Activated B cell treated with CpG ODN at 0.5 μM for 24 hours (primary cell): ENCODE measurements at regions of chr6 and their contacts with region 1.

Region 1: DNA sequence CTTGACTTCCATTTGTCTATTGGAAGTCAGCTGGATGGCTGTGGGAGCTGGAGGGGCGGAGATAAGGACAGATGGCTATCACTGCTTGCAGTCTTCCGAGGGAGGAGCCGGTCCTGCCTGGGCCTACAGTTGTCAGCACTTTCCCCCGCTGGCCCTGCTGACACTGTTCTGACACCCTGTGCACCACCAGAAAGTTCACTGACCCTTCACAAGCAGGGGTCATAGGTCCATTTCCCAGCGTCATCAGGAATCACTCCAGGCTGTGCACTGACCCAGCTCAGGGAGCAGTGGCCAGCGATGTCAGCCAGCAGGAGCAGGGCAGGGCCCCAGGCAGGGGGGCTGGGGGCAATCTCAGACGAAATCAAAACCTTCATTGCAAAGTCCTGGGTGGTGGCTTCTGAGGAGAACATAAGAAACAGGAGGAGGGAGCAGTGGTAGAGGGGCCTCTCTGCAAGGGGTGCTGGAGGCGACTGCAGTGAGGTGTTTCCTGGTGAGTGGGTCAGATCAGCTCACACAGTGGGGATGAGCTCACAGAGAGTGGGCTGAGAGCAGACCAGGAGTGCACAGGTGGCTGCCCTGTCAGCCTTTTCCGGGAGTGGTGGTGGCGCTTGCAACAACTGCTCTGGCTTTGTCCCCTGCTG is 26.5 kb upstream of the PLEKHG1 start:
- DNase-seq: no peak
- ATAC-seq: no peak
- H3K4me3 Mint-ChIP-seq: no peak overlapping the region
- H3K27ac Mint-ChIP-seq: no peak overlapping the region
- H3K4me1 Mint-ChIP-seq: peaks cover 22% of the 10 kb centered on the region
- H3K27me3 Mint-ChIP-seq: peaks cover 50% of the 10 kb centered on the region
- CTCF ChIP-seq: no peak

Region 2: GRCh38 chr6:149852180-149852579 is 721.0 kb before region 1 on chr6:
- CTCF ChIA-PET with region 1: no interaction called
- POLR2A ChIA-PET with region 1: no interaction called
- intact Hi-C with region 1: no loop called
- DNase-seq: no peak
- ATAC-seq: peak; percentile 91
- H3K4me3 Mint-ChIP-seq: peak overlapping the region; percentile 44
- H3K27ac Mint-ChIP-seq: peak overlapping the region; percentile 42
- H3K4me1 Mint-ChIP-seq: peaks cover 25% of the 10 kb centered on the region
- H3K27me3 Mint-ChIP-seq: no peaks in the 10 kb centered on the region
- CTCF ChIP-seq: no peak

Region 3: DNA sequence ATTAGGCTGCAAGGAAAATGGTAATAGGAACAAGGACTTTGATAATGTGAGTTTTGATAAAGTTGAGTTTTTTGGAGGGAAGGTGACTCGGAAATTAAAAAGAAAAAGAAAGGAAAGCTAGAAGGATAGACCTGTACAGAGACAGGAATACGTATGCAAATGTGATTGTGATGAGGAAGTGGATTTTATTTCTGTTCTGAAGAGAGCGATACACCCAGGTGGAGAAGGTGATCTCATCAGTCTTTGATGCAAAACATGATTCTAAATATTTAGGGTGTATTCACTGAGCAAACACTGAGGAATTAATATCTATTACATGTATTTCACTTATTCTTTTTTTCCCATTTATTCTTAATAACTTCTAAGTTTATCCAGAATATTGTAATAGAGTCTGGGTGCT is 17.3 kb after region 1 on chr6:
- CTCF ChIA-PET with region 1: no interaction called
- POLR2A ChIA-PET with region 1: interaction called, 3 read pairs
- intact Hi-C with region 1: loop called (anchors 2 kb)
- DNase-seq: no peak
- ATAC-seq: peak; percentile 40
- H3K4me3 Mint-ChIP-seq: no peak overlapping the region
- H3K27ac Mint-ChIP-seq: no peak overlapping the region
- H3K4me1 Mint-ChIP-seq: peaks cover 14% of the 10 kb centered on the region
- H3K27me3 Mint-ChIP-seq: peaks cover 5% of the 10 kb centered on the region
- CTCF ChIP-seq: no peak

Region 4: DNA sequence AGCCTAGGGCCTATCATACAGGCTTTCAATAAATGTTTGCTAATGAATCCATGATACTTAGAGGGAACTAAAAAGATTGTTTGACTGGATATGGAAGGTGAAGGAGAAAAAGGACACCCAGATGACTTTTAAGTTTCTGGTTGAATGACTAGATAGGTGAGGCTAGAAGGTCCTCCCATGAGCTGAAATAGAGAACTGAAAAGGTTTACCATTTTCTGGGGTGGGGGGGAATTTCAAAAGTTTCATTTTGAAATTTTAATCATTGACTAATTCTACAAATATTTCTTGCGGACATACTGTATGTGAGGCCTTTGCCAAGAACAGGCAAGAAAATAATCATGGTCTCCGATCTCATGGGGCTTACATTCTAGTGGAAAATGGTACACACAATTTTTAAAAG is 836.1 kb after region 1 on chr6:
- CTCF ChIA-PET with region 1: no interaction called
- POLR2A ChIA-PET with region 1: no interaction called
- intact Hi-C with region 1: no loop called
- DNase-seq: no peak
- ATAC-seq: peak; percentile 72
- H3K4me3 Mint-ChIP-seq: peak overlapping the region; percentile 9
- H3K27ac Mint-ChIP-seq: peak overlapping the region; percentile 60
- H3K4me1 Mint-ChIP-seq: peaks cover 19% of the 10 kb centered on the region
- H3K27me3 Mint-ChIP-seq: no peaks in the 10 kb centered on the region
- CTCF ChIP-seq: no peak